Heart right ventricle (tissue), 16 donors: ENCODE measurements at regions of chr10 and their contacts with region 1.

Region 1: DNA sequence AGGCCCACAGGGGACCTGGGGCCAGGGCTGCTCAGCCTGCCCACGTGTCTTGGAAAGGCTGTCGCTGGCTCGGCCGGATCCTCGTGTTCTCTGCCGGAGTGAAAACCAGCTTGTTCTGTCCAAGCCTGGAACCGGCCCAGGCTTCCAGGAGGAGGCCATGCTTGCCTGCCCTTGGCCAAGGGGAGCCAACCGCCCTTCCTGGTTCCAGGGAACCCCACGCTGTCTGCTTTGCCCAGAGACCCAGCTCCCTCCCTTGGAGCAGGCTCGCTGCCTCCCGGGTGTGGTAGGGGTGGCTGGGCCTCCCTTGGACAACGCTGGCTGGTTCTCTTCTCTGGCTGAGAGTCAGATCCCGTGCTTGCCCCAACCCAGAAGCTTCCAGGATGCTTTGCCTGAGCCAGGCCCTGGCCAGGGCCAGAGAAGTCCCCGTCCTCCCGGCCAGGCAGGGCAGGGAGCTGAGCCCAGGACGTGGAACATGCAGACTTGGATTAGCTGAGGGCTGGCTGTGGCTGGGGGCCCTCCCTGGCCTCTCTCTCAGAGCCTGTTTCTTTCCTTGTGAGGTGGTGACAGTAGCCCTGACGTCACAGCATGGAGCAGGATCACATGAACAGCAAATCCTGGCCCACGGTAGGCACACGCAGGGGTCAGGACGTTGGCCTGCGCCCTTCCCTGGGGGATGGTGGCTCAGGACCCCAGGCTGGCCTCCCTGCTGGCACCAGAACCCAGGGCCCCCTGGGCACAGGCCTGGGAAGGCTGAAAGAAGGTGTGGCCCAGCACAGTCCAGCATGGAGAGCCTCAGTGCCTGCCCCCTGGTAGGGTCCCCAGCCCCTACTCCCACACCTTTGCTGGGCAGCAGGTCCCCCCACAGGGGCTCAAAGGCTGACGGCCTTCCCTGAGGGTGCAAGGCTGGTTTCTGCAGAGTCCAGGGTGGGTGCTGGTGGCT is 67.5 kb downstream of the PWWP2B start:
- DNase-seq: peak; percentile 82 to 89
- ATAC-seq: peak; percentile 77 to 87 (median 84)
- H3K4me3 ChIP-seq: peak overlapping the region in 1 of 10 donors; percentile 15
- H3K27ac ChIP-seq: peak overlapping the region; percentile 84 to 99 (median 94)
- H3K4me1 ChIP-seq: peaks cover 25 to 81% (median 68%) of the 10 kb centered on the region in 9 donors
- H3K27me3 ChIP-seq: no peaks in the 10 kb centered on the region
- CTCF ChIP-seq: no peak

Region 2: GRCh38 chr10:132506711-132507408 is 42.3 kb after region 1 on chr10:
- intact Hi-C with region 1: loop called in 6 of 10 experiments (anchors 2 to 10 kb)
- DNase-seq: no peak
- ATAC-seq: peak in 6 of 8 donors; percentile 6 to 62 (median 23)
- H3K4me3 ChIP-seq: no peak overlapping the region
- H3K27ac ChIP-seq: peak overlapping the region in 7 of 10 donors; percentile 25 to 74 (median 66)
- H3K4me1 ChIP-seq: peaks cover 9 to 65% (median 36%) of the 10 kb centered on the region in 9 donors
- H3K27me3 ChIP-seq: no peaks in the 10 kb centered on the region
- CTCF ChIP-seq: no peak

Region 3: GRCh38 chr10:132939957-132940790 is 475.7 kb after region 1 on chr10:
- intact Hi-C with region 1: no loop called
- DNase-seq: no peak
- ATAC-seq: peak in 4 of 8 donors; percentile 15 to 62 (median 31)
- H3K4me3 ChIP-seq: no peak overlapping the region
- H3K27ac ChIP-seq: no peak overlapping the region
- H3K4me1 ChIP-seq: peaks cover 3 to 16% (median 13%) of the 10 kb centered on the region in 9 donors
- H3K27me3 ChIP-seq: peaks cover 0 to 63% (median 51%) of the 10 kb centered on the region in 7 donors
- CTCF ChIP-seq: peak; percentile 35 to 79 (median 73)